ENCODE measurements at regions of chr17 and their contacts with region 1.

Region 1: DNA sequence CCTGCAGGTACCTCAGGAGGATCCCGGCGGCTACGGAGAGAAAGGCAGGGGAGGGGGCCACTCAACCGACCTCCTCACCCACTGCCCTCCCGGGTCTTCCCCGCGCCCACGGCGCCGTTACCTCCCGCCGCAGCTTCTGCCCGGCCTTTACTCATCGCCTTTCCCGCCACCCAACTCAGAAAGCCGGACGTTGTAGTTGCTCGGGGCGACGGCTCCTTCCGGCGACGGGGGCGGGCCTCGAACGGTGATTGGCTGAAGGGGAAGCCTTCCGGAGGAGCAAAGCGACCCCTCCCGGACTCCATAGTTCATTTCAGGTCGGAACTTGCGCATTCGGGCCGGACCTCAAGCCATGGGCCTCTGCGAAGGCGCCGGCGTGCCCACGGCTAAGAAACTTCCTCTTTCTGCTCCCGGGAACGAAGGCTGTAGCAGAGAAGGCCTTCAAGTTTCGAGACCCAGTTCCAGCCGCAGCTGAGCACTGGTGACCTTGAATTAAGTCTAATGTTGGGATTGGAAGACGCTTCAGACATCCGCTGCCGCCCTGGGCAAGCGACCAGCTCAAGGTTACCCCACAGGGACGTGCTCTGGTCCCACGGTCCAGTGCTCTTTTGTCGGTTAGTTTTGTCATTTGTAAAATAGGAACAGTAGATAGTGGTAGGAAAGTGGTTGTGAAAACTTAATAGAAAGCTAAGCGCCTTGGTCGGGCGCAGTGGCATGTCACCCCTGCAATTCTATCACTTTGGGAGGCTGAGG is at the start of gene PSMC3IP:
- DNase-seq: peak; percentile 86
- ATAC-seq: peak; percentile 90
- H3K4me3 Mint-ChIP-seq: peak within 1 kb of the TSS; percentile 95
- H3K27ac Mint-ChIP-seq: peak within 1 kb of the TSS; percentile 97
- H3K4me1 Mint-ChIP-seq: peaks cover 38% of the 10 kb centered on the region
- H3K27me3 Mint-ChIP-seq: no peaks in the 10 kb centered on the region
- CTCF ChIP-seq: no peak
- total RNA-seq, gene PSMC3IP: 9.0 and 10.8 TPM in 2 replicates

Region 2: DNA sequence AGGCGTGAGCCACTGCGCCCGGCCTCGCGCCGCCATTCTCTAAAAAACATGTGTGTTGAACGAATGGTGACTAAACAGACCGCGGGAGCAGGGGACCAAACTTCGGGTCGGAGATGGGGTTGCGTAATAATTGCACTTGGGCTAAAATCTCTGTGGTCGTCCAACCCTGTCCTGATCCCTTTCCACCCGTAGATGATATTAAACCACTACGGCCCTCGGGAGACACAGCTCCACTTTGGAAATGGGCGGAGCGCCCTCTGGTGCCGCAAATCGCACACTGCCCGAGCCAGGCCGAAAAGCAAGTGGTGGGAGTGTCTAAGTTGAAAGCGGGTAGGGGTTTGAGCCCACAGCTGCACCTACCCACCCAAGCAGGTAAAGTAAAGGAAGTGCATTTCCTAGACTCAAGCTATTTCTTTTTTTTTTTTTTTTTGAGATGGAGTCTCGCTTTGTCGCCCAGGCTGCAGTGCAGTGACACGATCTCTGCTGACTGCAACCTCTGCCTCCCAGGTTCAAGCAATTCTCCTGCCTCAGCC is 171.7 kb before region 1 on chr17:
- CTCF ChIA-PET with region 1: no interaction called
- POLR2A ChIA-PET with region 1: no interaction called
- intact Hi-C with region 1: no loop called
- DNase-seq: peak; percentile 77
- ATAC-seq: peak; percentile 83
- H3K4me3 Mint-ChIP-seq: no peak overlapping the region
- H3K27ac Mint-ChIP-seq: no peak overlapping the region
- H3K4me1 Mint-ChIP-seq: peaks cover 8% of the 10 kb centered on the region
- H3K27me3 Mint-ChIP-seq: peaks cover 3% of the 10 kb centered on the region
- CTCF ChIP-seq: no peak

Region 3: GRCh38 chr17:42457132-42457483 is 120.6 kb before region 1 on chr17:
- CTCF ChIA-PET with region 1: no interaction called
- POLR2A ChIA-PET with region 1: no interaction called
- intact Hi-C with region 1: no loop called
- DNase-seq: no peak
- ATAC-seq: no peak
- H3K4me3 Mint-ChIP-seq: peak overlapping the region; percentile 83
- H3K27ac Mint-ChIP-seq: peak overlapping the region; percentile 95
- H3K4me1 Mint-ChIP-seq: peaks cover 81% of the 10 kb centered on the region
- H3K27me3 Mint-ChIP-seq: no peaks in the 10 kb centered on the region
- CTCF ChIP-seq: no peak

Region 4: GRCh38 chr17:42508426-42509165 is 69.1 kb before region 1 on chr17:
- CTCF ChIA-PET with region 1: no interaction called
- POLR2A ChIA-PET with region 1: no interaction called
- intact Hi-C with region 1: no loop called
- DNase-seq: no peak
- ATAC-seq: no peak
- H3K4me3 Mint-ChIP-seq: no peak overlapping the region
- H3K27ac Mint-ChIP-seq: no peak overlapping the region
- H3K4me1 Mint-ChIP-seq: peaks cover 15% of the 10 kb centered on the region
- H3K27me3 Mint-ChIP-seq: no peaks in the 10 kb centered on the region
- CTCF ChIP-seq: no peak

Region 5: DNA sequence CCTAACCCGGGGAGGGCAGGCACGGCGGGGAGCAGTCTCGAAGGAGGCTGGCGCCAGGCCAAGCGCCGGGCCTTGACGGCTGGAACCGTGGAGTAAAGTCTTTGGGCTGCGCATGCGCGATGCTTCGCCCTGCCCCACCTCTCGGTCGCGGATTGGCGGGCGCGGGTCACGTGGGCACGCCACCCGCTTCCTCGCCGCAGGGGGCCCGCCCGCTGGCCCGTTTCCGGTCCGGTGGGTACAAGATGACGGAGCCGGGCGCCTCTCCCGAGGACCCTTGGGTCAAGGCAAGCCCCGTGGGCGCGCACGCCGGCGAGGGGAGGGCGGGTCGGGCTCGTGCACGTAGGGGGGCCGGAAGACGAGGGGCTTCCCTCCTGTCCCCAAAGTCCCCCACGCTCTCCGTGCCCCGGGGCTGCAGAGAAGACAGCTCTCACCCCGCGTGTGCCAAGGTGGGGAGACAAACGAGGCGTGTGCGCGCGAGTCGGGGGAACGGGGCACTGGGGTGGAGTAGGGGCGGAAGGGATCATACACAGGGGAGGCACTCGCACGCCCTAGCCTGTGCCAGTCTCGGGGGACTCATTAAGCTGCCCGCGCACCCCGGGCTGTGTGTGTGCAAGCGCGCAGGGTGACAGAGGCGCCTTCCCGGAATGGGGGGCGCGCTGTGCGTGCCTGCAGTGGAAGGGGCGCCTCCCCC is 10.7 kb before region 1 on chr17 and contains the start of gene MLX:
- CTCF ChIA-PET with region 1: interaction called, 8 read pairs
- POLR2A ChIA-PET with region 1: interaction called, 62 read pairs
- intact Hi-C with region 1: loop called (anchors 1 kb)
- DNase-seq: peak; percentile 90
- ATAC-seq: peak; percentile 83
- H3K4me3 Mint-ChIP-seq: peak within 1 kb of the TSS; percentile 98
- H3K27ac Mint-ChIP-seq: peak within 1 kb of the TSS; percentile 95
- H3K4me1 Mint-ChIP-seq: peaks cover 35% of the 10 kb centered on the region
- H3K27me3 Mint-ChIP-seq: no peaks in the 10 kb centered on the region
- CTCF ChIP-seq: no peak
- total RNA-seq, gene MLX: 53.4 and 59.7 TPM in 2 replicates

Region 6: DNA sequence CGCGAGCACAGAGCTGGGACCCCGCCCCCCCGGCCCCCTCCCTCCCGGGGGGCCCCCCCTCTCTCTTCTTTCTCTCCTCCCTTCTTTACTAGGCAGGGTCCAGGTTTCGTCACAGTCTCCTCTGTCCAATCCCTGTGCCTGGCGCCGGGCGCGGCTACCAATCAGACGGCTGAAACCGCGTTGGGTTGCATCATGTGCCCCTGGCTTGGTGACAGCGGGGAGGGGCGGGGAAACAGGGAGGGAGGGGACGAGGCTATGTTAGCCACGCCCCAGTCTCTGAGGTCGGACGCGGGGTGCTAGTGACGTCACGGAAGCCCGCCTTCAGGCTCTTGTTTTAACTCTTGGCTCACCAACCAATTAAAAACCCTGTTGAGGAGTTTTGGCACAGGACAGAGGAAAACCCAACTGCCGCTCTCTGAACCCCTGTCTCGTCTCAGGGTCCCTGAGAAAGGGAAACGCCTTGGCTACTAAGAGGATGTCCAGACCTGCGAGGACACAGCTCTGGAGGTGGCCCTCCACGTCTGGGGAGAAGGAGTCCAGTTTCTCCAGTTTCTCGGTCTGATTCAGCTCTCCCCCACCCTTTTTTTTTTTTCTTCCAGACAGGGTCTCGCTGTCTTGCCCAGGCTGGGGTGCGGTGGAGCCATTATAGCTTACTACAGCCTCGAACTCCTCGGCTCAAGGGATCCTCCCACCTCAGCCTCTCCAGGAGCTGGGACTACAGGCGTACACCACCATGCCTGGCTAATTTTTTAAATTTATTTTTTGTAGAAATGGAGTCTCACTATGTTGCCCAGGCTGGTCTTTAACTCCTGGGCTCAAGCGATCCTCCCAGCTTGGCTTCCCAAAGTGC is 99.5 kb after region 1 on chr17:
- CTCF ChIA-PET with region 1: interaction called, 53 read pairs
- POLR2A ChIA-PET with region 1: interaction called, 31 read pairs
- intact Hi-C with region 1: loop called (anchors 1 kb)
- DNase-seq: peak; percentile 86
- ATAC-seq: peak; percentile 74
- H3K4me3 Mint-ChIP-seq: peak overlapping the region; percentile 87
- H3K27ac Mint-ChIP-seq: peak overlapping the region; percentile 78
- H3K4me1 Mint-ChIP-seq: peaks cover 65% of the 10 kb centered on the region
- H3K27me3 Mint-ChIP-seq: peaks cover 12% of the 10 kb centered on the region
- CTCF ChIP-seq: no peak

Region 7: DNA sequence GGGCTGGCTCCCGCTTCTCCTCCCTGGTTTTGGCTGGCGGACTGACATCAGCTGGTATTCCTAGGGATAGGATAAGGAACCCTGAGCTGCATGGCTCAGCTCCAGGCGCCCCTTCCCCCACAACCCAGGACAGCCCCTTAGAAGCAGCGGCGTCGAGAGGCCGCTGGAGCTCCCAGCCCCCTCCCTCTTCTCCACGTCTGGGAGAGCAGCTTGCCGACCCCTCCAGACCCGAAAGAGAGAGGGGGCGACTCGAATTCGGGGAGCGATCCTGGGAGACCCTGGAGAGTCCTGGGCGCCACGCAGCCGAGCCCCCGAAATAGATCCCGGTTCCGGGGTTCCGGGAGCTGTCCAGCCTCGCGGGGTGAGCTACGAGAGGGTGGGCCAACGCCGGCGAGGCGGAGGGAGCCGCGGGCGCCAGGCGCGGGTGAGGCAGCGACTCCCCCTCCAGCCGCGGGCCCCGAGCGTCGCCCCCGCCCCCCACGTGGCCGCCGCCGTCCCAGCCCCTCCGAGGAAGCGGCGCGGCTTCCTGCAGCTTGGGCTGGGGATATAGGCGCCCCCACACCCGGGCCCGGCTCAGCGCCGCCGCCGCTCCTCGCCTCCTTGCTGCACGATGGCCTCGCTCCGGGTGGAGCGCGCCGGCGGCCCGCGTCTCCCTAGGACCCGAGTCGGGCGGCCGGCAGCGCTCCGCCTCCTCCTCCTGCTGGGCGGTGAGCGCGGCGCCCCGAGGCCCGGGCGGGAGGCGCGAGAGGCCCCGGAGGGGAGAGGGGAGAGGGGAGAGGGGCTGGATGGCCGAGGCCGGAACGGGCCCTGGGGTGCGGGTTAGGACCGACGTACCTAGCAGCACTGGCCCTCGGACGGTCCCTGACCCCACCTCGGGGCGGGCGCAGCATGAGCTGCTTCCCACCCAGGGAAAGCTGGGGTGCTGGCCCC is 183.2 kb after region 1 on chr17 and contains the start of gene RAMP2:
- CTCF ChIA-PET with region 1: interaction called, 37 read pairs
- POLR2A ChIA-PET with region 1: interaction called, 26 read pairs
- intact Hi-C with region 1: loop called (anchors 1 kb)
- DNase-seq: no peak
- ATAC-seq: peak; percentile 23
- H3K4me3 Mint-ChIP-seq: peak within 1 kb of the TSS; percentile 81
- H3K27ac Mint-ChIP-seq: peak within 1 kb of the TSS; percentile 61
- H3K4me1 Mint-ChIP-seq: peaks cover 12% of the 10 kb centered on the region
- H3K27me3 Mint-ChIP-seq: peaks cover 32% of the 10 kb centered on the region
- CTCF ChIP-seq: no peak
- total RNA-seq, gene RAMP2: not detected in 2 replicates

Region 8: DNA sequence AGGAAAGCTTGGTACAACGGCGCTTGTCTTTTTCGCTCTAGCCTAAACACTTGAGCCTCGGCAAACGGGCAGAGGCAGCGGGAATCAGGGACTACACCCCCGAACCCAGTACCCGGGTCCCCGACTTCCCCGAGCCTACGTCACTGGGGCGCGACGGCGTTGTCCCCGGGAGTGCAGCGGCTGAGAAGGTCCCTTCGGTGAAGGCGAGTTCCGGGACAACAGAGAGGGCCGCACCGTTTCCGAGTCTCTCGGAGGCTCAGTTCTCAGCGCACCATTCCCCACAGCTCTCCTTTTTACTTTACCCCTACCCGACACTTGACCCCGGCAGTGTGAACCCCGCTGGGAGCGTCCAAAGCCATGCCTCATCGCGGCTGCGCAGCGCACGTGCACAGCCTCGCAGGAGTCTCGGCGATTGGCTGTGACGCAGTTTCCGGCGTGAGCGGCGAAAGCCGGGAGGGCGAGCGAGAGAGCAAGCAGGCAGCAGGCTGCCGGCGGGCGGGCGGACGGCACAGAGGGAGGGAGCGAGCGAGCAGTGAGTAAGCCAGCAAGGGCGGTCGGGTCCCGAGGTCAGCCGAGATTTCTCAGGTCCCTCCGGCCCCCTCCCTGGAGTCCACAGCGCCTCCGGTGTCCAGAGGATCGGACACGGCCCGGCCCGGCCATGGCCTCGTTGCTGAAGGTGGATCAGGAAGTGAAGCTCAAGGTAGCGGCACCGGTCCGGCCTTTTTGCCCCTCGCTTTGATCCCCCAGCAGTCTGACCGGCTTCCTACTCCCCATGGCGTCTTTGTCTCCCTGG is 255.5 kb after region 1 on chr17 and contains the start of gene PSME3:
- CTCF ChIA-PET with region 1: interaction called, 5 read pairs
- POLR2A ChIA-PET with region 1: interaction called, 10 read pairs
- intact Hi-C with region 1: no loop called
- DNase-seq: peak; percentile 84
- ATAC-seq: peak; percentile 91
- H3K4me3 Mint-ChIP-seq: peak within 1 kb of the TSS; percentile 97
- H3K27ac Mint-ChIP-seq: peak within 1 kb of the TSS; percentile 99
- H3K4me1 Mint-ChIP-seq: peaks cover 24% of the 10 kb centered on the region
- H3K27me3 Mint-ChIP-seq: no peaks in the 10 kb centered on the region
- CTCF ChIP-seq: no peak
- total RNA-seq, gene PSME3: 136 and 141 TPM in 2 replicates

Region 9: GRCh38 chr17:42878123-42878880 is 300.6 kb after region 1 on chr17:
- CTCF ChIA-PET with region 1: no interaction called
- POLR2A ChIA-PET with region 1: no interaction called
- intact Hi-C with region 1: no loop called
- DNase-seq: no peak
- ATAC-seq: no peak
- H3K4me3 Mint-ChIP-seq: no peak overlapping the region
- H3K27ac Mint-ChIP-seq: no peak overlapping the region
- H3K4me1 Mint-ChIP-seq: no peaks in the 10 kb centered on the region
- H3K27me3 Mint-ChIP-seq: peaks cover 17% of the 10 kb centered on the region
- CTCF ChIP-seq: no peak